ENCODE measurements at regions of chr3 and their contacts with region 1.

Region 1: GRCh38 chr3:189282741-189283140 is 111.0 kb downstream of the TPRG1 start:
- DNase-seq: no peak
- H3K4me3 Mint-ChIP-seq: no peak overlapping the region
- H3K27ac Mint-ChIP-seq: peak overlapping the region; percentile 80
- H3K4me1 Mint-ChIP-seq: peaks cover 14% of the 10 kb centered on the region
- H3K27me3 Mint-ChIP-seq: no peaks in the 10 kb centered on the region
- CTCF ChIP-seq: no peak

Region 2: GRCh38 chr3:189027626-189028155 is 255.1 kb before region 1 on chr3:
- CTCF ChIA-PET with region 1: no interaction called
- POLR2A ChIA-PET with region 1: no interaction called
- intact Hi-C with region 1: no loop called
- DNase-seq: no peak
- H3K4me3 Mint-ChIP-seq: no peak overlapping the region
- H3K27ac Mint-ChIP-seq: no peak overlapping the region
- H3K4me1 Mint-ChIP-seq: no peaks in the 10 kb centered on the region
- H3K27me3 Mint-ChIP-seq: no peaks in the 10 kb centered on the region
- CTCF ChIP-seq: no peak

Region 3: GRCh38 chr3:189298469-189299375 is 16.0 kb after region 1 on chr3:
- CTCF ChIA-PET with region 1: interaction called, 4 read pairs
- POLR2A ChIA-PET with region 1: interaction called, 495 read pairs
- intact Hi-C with region 1: no loop called
- DNase-seq: peak; percentile 87
- H3K4me3 Mint-ChIP-seq: no peak overlapping the region
- H3K27ac Mint-ChIP-seq: peak overlapping the region; percentile 64
- H3K4me1 Mint-ChIP-seq: peaks cover 45% of the 10 kb centered on the region
- H3K27me3 Mint-ChIP-seq: no peaks in the 10 kb centered on the region
- CTCF ChIP-seq: no peak